Calu3 (cell line): ENCODE measurements at regions of chr4 and their contacts with region 1.

Region 1: GRCh38 chr4:150209140-150209829 is 131.0 kb downstream of the DCLK2 start:
- DNase-seq: peak; percentile 66
- H3K4me3 Mint-ChIP-seq: no peak overlapping the region
- H3K27ac Mint-ChIP-seq: no peak overlapping the region
- H3K4me1 Mint-ChIP-seq: no peaks in the 10 kb centered on the region
- H3K27me3 Mint-ChIP-seq: peaks cover 14% of the 10 kb centered on the region
- CTCF ChIP-seq: no peak

Region 2: GRCh38 chr4:149999485-150000074 is 209.7 kb before region 1 on chr4:
- CTCF ChIA-PET with region 1: interaction called, 4 read pairs
- intact Hi-C with region 1: loop called (anchors 2 kb)
- DNase-seq: peak; percentile 25
- H3K4me3 Mint-ChIP-seq: no peak overlapping the region
- H3K27ac Mint-ChIP-seq: no peak overlapping the region
- H3K4me1 Mint-ChIP-seq: peaks cover 15% of the 10 kb centered on the region
- H3K27me3 Mint-ChIP-seq: no peaks in the 10 kb centered on the region
- CTCF ChIP-seq: no peak

Region 3: GRCh38 chr4:150082241-150082640 is 127.0 kb before region 1 on chr4:
- CTCF ChIA-PET with region 1: interaction called, 9 read pairs
- intact Hi-C with region 1: loop called (anchors 10 kb)
- DNase-seq: no peak
- H3K4me3 Mint-ChIP-seq: no peak overlapping the region
- H3K27ac Mint-ChIP-seq: no peak overlapping the region
- H3K4me1 Mint-ChIP-seq: peaks cover 4% of the 10 kb centered on the region
- H3K27me3 Mint-ChIP-seq: no peaks in the 10 kb centered on the region
- CTCF ChIP-seq: no peak

Region 4: GRCh38 chr4:150259861-150260567 is 50.7 kb after region 1 on chr4:
- CTCF ChIA-PET with region 1: no interaction called
- intact Hi-C with region 1: no loop called
- DNase-seq: no peak
- H3K4me3 Mint-ChIP-seq: no peak overlapping the region
- H3K27ac Mint-ChIP-seq: no peak overlapping the region
- H3K4me1 Mint-ChIP-seq: no peaks in the 10 kb centered on the region
- H3K27me3 Mint-ChIP-seq: no peaks in the 10 kb centered on the region
- CTCF ChIP-seq: no peak